ENCODE measurements at regions of chr3 and their contacts with region 1.

Region 1: DNA sequence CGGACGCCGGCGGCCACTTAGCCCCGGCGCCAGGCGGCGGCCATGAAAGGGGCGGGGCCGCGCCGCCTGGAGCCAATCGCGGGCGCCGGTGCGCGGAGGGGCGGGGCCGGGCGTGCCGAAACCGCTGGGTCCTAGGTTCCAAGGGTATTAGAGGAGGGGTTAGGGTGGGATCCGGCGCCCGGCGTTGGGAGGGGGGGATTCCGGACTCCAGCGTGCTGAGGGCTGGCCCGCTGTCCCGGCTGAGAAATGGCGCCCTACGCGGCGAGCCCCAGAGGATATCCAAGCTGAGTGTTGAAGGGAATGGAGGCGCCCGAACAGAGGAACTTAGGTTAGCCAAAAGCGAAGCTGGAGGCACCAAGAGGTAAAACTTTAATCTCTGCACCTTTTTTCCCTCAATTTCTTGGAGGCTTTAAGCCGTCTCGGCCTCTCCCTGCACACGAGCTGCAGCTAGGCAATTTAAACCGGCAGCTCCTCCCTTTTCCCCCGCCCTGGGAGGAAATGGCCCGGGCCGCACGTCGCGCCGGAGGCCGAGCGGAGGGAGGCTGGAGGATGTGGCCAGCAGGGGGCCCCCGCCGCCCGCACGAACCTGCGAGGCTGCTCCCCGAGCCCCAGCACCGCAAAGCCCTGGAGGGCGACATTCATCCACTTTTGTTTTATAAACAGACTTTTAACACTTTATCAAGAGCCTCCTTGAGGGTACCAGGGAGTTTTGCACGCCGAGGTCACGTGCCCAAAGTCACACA is at the start of gene XXYLT1:
- DNase-seq: peak; percentile 69 to 96
- H3K4me3 ChIP-seq: peak within 1 kb of the TSS; percentile 70 to 86 (median 80)
- H3K27ac ChIP-seq: peak within 1 kb of the TSS; percentile 78; the same call in 1 of the 2 replicates
- H3K4me1 ChIP-seq: peaks cover 0 to 9% (median 7%) of the 10 kb centered on the region in 4 experiments; a peak in 5 of 7 replicates
- H3K27me3 ChIP-seq: no peaks in the 10 kb centered on the region
- CTCF ChIP-seq: peak; percentile 75 to 97 (median 85)
- EP300 ChIP-seq: 0 out of 3 replicates have a peak, but pooled peaks of 1 of the 2 experiments have one; percentile 3
- POLR2A ChIP-seq: peak; percentile 54 to 90
- RAD21 ChIP-seq: peak; percentile 91 to 95
- total RNA-seq, gene XXYLT1: 23.8 and 24.5 TPM in 2 replicates

Region 2: DNA sequence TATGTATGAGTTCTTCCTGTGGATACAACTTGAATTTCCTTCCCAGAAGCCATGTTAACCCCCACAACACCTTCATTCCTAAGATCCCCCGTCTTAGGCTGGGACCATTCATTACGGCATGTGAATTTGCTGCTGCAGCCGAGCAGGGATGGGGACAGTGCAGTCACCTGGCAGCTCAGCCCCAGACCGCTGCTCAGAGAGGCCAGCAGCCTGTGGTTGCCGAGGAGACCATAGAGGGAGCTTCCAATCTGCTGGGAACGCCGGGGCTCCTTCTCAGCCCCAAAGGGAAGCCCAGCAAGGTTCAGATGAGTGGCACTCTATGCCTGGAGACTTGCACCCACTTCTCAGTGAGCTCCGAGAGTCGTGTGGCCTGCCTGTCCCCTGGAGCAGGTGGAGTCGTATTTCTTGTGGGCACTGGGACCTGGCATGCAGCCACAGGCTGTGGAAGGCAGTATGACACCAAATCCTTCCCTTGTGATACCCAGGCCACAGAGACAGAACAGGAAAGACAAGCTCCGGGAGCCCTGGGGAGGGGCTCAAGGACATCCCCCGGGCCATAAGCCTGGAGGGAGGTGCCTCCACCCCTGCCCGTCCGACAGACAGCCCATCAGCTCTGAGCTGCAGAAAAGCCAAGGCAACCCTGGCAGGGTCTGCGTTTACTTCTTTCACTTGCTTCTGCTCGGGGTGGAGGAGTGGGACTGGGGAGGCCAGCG is 418.3 kb before region 1 on chr3:
- CTCF ChIA-PET with region 1: no interaction called
- POLR2A ChIA-PET with region 1: no interaction called
- DNase-seq: no peak
- H3K4me3 ChIP-seq: no peak overlapping the region
- H3K27ac ChIP-seq: no peak overlapping the region
- H3K4me1 ChIP-seq: peaks cover 0 to 8% (median 0%) of the 10 kb centered on the region in 4 experiments; a peak in 2 of 7 replicates
- H3K27me3 ChIP-seq: no peaks in the 10 kb centered on the region
- CTCF ChIP-seq: no peak
- EP300 ChIP-seq: no peak
- POLR2A ChIP-seq: no peak
- RAD21 ChIP-seq: no peak

Region 3: DNA sequence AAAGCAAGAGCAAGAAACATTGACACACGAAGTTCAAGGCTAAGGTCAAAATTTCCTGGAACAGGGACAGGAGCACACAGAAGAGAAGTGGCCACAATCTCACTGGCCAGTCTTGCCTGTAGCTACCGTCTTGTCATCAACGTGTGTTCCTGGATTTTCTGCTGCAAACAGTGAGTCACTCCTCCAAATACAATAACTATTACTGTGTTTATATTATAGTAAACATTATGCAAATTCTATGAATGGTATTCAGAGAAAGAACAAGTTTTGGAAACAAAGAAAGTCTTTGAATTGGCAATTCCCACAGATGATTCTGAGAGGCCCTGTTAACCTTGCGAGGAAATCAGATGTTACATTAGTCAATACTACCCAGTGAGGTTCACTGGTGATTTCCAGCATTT is 365.1 kb before region 1 on chr3:
- CTCF ChIA-PET with region 1: no interaction called
- POLR2A ChIA-PET with region 1: no interaction called
- DNase-seq: no peak
- H3K4me3 ChIP-seq: no peak overlapping the region
- H3K27ac ChIP-seq: no peak overlapping the region
- H3K4me1 ChIP-seq: no peaks in the 10 kb centered on the region
- H3K27me3 ChIP-seq: no peaks in the 10 kb centered on the region
- CTCF ChIP-seq: no peak
- EP300 ChIP-seq: no peak
- POLR2A ChIP-seq: no peak
- RAD21 ChIP-seq: no peak

Region 4: DNA sequence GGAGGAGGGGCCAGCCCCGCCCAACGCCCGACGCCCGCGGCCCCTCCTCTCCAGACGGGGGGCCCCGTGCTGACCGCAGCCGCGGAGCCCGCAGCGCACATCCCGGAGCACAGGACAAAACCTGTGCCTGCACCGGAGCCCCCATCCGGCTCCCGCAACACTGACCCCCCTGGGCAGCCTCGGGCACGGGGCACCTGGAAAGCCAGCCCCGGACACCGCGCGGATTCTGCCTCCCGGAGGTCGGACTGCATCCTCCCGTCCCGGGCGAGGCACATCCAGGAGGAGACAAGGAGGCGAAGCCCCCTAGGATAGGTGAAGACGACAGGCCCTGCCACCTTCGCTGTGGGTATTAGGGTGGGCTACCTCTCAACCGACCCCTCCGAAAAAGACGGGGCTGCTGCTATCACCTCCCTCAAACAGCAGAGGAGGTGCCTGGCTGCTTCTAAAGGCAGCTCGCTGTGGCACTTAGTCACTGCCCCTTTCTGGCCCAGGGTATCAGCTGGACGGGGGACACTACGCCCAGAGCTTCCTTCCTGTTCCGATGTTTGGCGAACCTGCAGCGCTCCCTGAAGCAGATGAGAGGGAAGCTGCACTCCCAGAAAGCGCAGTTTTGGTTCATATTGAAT is 10.9 kb before region 1 on chr3:
- CTCF ChIA-PET with region 1: interaction called, 23 read pairs
- POLR2A ChIA-PET with region 1: interaction called, 30 read pairs
- DNase-seq: peak in 1 of 2 experiments; percentile 90
- H3K4me3 ChIP-seq: peak overlapping the region; percentile 35 to 69 (median 59)
- H3K27ac ChIP-seq: no peak overlapping the region
- H3K4me1 ChIP-seq: peaks cover 7 to 28% (median 16%) of the 10 kb centered on the region in 4 experiments
- H3K27me3 ChIP-seq: no peaks in the 10 kb centered on the region
- CTCF ChIP-seq: no peak
- EP300 ChIP-seq: no peak
- POLR2A ChIP-seq: no peak
- RAD21 ChIP-seq: no peak

Region 5: GRCh38 chr3:195442573-195443390 is 171.5 kb after region 1 on chr3 and contains the start of gene ACAP2:
- CTCF ChIA-PET with region 1: interaction called, 3 read pairs
- POLR2A ChIA-PET with region 1: interaction called, 13 read pairs
- DNase-seq: peak; percentile 99 to 100
- H3K4me3 ChIP-seq: peak within 1 kb of the TSS; percentile 75 to 89 (median 88)
- H3K27ac ChIP-seq: peak within 1 kb of the TSS; percentile 53; the same call in 1 of the 2 replicates
- H3K4me1 ChIP-seq: peaks cover 5 to 16% (median 8%) of the 10 kb centered on the region in 4 experiments; a peak in 5 of 7 replicates
- H3K27me3 ChIP-seq: no peaks in the 10 kb centered on the region
- CTCF ChIP-seq: no peak
- EP300 ChIP-seq: no peak
- POLR2A ChIP-seq: peak; percentile 64 to 85
- RAD21 ChIP-seq: peak in 1 of 2 experiments; percentile 0; a peak in 1 of 4 replicates
- total RNA-seq, gene ACAP2: 35.1 and 37.3 TPM in 2 replicates

Region 6: GRCh38 chr3:195511136-195511535 is 239.8 kb after region 1 on chr3:
- CTCF ChIA-PET with region 1: interaction called, 12 read pairs
- POLR2A ChIA-PET with region 1: no interaction called
- DNase-seq: no peak
- H3K4me3 ChIP-seq: no peak overlapping the region
- H3K27ac ChIP-seq: no peak overlapping the region
- H3K4me1 ChIP-seq: no peaks in the 10 kb centered on the region
- H3K27me3 ChIP-seq: no peaks in the 10 kb centered on the region
- CTCF ChIP-seq: no peak
- EP300 ChIP-seq: no peak
- POLR2A ChIP-seq: no peak
- RAD21 ChIP-seq: no peak

Region 7: GRCh38 chr3:195522254-195523023 is 251.2 kb after region 1 on chr3:
- CTCF ChIA-PET with region 1: interaction called, 65 read pairs
- POLR2A ChIA-PET with region 1: interaction called, 8 read pairs
- DNase-seq: no peak
- H3K4me3 ChIP-seq: no peak overlapping the region
- H3K27ac ChIP-seq: no peak overlapping the region
- H3K4me1 ChIP-seq: no peaks in the 10 kb centered on the region
- H3K27me3 ChIP-seq: no peaks in the 10 kb centered on the region
- CTCF ChIP-seq: peak in 2 of 3 experiments; percentile 19 to 21; a peak in 2 of 4 replicates
- EP300 ChIP-seq: no peak
- POLR2A ChIP-seq: no peak
- RAD21 ChIP-seq: peak; percentile 67 to 76

Region 8: GRCh38 chr3:195542698-195543499 is 271.6 kb after region 1 on chr3 and contains the start of gene PPP1R2:
- CTCF ChIA-PET with region 1: interaction called, 14 read pairs
- POLR2A ChIA-PET with region 1: interaction called, 15 read pairs
- DNase-seq: peak; percentile 72 to 92
- H3K4me3 ChIP-seq: peak within 1 kb of the TSS; percentile 70 to 88 (median 82)
- H3K27ac ChIP-seq: no peak within 1 kb of the TSS
- H3K4me1 ChIP-seq: peaks cover under 1 to 7% (median 3%) of the 10 kb centered on the region in 4 experiments; a peak in 5 of 7 replicates
- H3K27me3 ChIP-seq: peaks cover 1 to 16% (median 13%) of the 10 kb centered on the region in 4 experiments; a peak in 6 of 7 replicates
- CTCF ChIP-seq: no peak
- EP300 ChIP-seq: no peak
- POLR2A ChIP-seq: peak; percentile 89 to 90
- RAD21 ChIP-seq: no peak
- total RNA-seq, gene PPP1R2: 26.5 and 27.4 TPM in 2 replicates